Common myeloid progenitor, CD34-positive (primary cell): ENCODE measurements at regions of chr17 and their contacts with region 1.

Region 1: DNA sequence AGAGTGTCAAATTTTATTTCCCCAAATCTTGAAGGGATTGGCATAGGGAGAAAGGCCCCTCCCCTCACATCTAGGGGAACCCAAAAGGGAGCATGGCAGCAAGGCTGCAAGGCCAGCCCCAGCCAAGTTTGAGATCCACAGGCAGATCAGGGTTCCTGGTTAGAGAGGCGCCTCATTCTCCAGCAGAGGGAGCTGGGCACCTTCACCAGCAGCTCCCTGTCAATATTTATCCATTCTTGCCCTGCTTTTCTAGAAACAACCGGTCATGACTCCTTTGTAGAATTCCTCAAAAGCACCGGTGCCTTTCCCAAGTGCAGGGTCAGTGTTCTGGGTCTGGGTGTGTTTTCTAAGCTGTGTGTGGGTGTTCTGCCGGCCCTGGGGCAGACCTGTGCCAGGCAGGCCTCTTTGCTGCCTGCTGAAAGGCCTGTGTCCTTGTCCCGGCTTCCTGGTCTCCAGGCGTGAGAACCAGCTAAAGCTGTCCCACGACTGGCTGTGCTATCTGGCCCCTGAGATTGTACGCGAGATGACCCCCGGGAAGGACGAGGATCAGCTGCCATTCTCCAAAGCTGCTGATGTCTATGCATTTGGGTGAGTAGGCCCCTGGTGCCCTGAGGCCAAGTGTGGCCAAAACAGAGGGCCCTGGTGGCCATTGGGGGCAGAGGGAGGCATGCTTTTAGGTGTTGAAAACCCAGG is 21.2 kb upstream of the LGALS9 start:
- DNase-seq: peak; percentile 36 to 66 (median 60)
- H3K4me3 ChIP-seq: no peak overlapping the region
- H3K27ac ChIP-seq: no peak overlapping the region
- H3K4me1 ChIP-seq: no peaks in the 10 kb centered on the region
- H3K27me3 ChIP-seq: no peaks in the 10 kb centered on the region

Region 2: GRCh38 chr17:27622986-27623385 is 13.2 kb after region 1 on chr17:
- CTCF ChIA-PET with region 1: interaction called, 18 read pairs
- POLR2A ChIA-PET with region 1: no interaction called
- DNase-seq: no peak
- H3K4me3 ChIP-seq: no peak overlapping the region
- H3K27ac ChIP-seq: no peak overlapping the region
- H3K4me1 ChIP-seq: peaks cover 0 to 7% (median 2%) of the 10 kb centered on the region in 4 experiments
- H3K27me3 ChIP-seq: no peaks in the 10 kb centered on the region

Region 3: GRCh38 chr17:27630607-27631410 is 21.1 kb after region 1 on chr17 and contains the start of gene LGALS9:
- CTCF ChIA-PET with region 1: interaction called, 39 read pairs
- POLR2A ChIA-PET with region 1: no interaction called
- DNase-seq: peak; percentile 29 to 81 (median 68)
- H3K4me3 ChIP-seq: peak within 1 kb of the TSS; percentile 23 to 83 (median 77)
- H3K27ac ChIP-seq: peak within 1 kb of the TSS; percentile 50 to 79
- H3K4me1 ChIP-seq: peaks cover 7 to 57% (median 45%) of the 10 kb centered on the region in 4 experiments
- H3K27me3 ChIP-seq: no peaks in the 10 kb centered on the region

Region 4: GRCh38 chr17:27647765-27648164 is 38.0 kb after region 1 on chr17:
- CTCF ChIA-PET with region 1: interaction called, 102 read pairs
- POLR2A ChIA-PET with region 1: no interaction called
- DNase-seq: no peak
- H3K4me3 ChIP-seq: no peak overlapping the region
- H3K27ac ChIP-seq: no peak overlapping the region
- H3K4me1 ChIP-seq: no peaks in the 10 kb centered on the region
- H3K27me3 ChIP-seq: no peaks in the 10 kb centered on the region

Region 5: DNA sequence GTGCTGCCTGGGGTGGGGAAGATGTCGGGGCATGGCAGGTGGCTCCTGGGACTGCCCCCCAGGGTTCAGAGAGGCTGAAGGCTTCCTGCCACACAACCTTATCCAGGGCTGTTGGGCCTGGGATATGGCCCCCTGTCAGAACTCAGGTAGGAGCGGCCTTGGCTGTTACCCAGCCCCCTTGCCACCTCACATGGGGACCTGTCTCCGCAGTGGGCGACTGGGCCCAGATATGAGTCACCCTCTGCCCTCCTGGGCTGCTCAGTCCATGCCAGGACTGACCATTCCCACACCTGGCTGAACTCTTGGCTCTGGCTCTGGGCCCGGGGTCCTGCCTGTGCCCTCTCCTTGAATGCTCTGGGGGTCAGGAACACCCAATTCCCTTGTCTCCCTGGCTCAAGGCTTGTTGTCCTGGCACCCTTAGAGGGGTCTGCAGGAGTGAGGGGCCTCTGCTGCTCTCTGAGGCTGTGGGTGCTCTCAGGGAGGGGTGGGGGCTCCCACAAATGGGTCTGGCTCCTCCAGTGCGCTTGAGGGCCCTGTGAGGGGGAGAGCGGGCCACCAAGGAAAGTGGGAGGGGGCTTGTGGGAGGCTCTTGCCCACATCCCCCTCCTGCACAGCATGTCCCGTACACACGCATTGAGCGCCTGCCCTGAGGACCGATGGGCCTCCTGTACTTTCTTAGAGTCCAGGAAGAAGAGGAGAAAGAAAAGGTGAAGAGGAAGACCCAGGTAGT is 57.2 kb after region 1 on chr17:
- CTCF ChIA-PET with region 1: no interaction called
- POLR2A ChIA-PET with region 1: no interaction called
- DNase-seq: no peak
- H3K4me3 ChIP-seq: no peak overlapping the region
- H3K27ac ChIP-seq: no peak overlapping the region
- H3K4me1 ChIP-seq: no peaks in the 10 kb centered on the region
- H3K27me3 ChIP-seq: peaks cover 0 to 2% (median 0%) of the 10 kb centered on the region in 5 experiments